Ascending aorta (tissue), 2 donors: ENCODE measurements at regions of chr2 and their contacts with region 1.

Region 1: GRCh38 chr2:170715062-170715931 is at the start of gene SP5:
- DNase-seq: peak in 1 of 2 donors; percentile 66
- H3K4me3 ChIP-seq: peak within 1 kb of the TSS; percentile 48 to 68
- H3K27ac ChIP-seq: peak within 1 kb of the TSS in 1 of 2 donors; percentile 29
- H3K4me1 ChIP-seq: peaks cover 8 to 12% of the 10 kb centered on the region in 2 donors
- H3K27me3 ChIP-seq: peaks cover 14% of the 10 kb centered on the region
- CTCF ChIP-seq: no peak
- total RNA-seq, gene SP5: 2.8 TPM

Region 2: DNA sequence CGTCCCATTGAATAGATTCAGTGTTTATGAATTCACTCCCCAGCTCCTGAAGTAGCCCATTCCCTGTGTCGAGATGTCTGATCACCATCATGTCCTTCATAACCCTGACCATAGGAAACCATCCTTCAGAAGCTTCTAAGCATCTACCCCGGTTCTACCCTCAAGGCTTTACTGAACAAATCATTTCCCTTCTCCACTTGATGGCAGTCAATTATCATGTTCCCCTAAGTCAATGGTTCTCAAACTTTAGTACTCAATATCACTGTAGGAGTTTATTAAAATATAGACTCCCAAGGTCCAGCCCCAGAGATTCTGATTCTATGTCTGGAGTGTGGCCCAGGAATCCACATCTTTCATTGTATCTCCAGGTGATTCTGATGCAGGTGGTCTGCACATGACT is 228.6 kb before region 1 on chr2:
- intact Hi-C with region 1: loop called (anchors 5 kb)
- DNase-seq: no peak
- H3K4me3 ChIP-seq: no peak overlapping the region
- H3K27ac ChIP-seq: no peak overlapping the region
- H3K4me1 ChIP-seq: no peaks in the 10 kb centered on the region
- H3K27me3 ChIP-seq: no peaks in the 10 kb centered on the region
- CTCF ChIP-seq: peak in 2 of 3 experiments; percentile 20 to 49

Region 3: GRCh38 chr2:170680172-170680941 is 34.9 kb before region 1 on chr2:
- intact Hi-C with region 1: no loop called
- DNase-seq: no peak
- H3K4me3 ChIP-seq: no peak overlapping the region
- H3K27ac ChIP-seq: no peak overlapping the region
- H3K4me1 ChIP-seq: no peaks in the 10 kb centered on the region
- H3K27me3 ChIP-seq: no peaks in the 10 kb centered on the region
- CTCF ChIP-seq: no peak

Region 4: DNA sequence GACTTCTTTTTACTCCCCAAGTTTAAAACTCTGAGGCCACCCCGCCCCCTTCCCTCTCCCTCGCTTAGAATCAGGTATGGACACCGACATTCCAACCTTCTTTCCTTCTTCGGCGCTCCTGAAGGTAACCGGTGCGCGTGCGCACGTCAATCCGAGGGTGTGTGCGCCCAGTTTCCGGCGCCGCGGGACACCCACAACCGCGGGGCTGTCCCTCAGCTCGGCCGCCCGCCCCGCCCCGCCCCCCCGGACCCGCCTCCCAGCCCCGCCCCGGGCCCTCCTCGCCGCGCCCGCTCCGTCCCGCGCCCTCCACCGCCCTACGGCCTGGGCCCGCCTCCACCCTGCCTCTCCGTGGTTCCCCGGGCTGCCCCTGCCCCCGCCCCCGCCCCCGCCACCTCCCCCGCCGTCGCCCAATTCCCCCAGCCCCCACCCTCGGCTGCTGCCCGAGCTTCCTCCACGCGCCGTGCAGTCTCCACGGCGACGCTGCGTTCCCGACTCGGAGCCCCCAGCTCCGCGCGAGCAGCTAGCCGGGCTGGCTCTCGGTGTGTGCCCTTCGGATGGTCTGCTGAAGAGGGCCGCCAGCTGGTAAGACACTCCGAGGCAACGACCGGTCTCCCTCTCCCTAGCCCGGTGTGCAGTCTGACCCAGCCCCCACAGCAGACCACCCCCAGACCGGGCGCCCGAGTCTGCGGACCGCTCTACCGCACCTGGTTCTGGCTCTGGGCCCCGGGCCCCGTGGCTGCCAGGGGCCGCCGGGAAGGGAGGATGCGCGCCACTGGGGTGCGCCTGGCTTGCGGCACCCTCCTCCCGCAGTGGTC is 55.5 kb after region 1 on chr2:
- intact Hi-C with region 1: loop called (anchors 5 kb)
- DNase-seq: peak in 1 of 2 donors; percentile 83
- H3K4me3 ChIP-seq: peak overlapping the region; percentile 71 to 75
- H3K27ac ChIP-seq: peak overlapping the region; percentile 68 to 80
- H3K4me1 ChIP-seq: no peaks in the 10 kb centered on the region
- H3K27me3 ChIP-seq: no peaks in the 10 kb centered on the region
- CTCF ChIP-seq: no peak